Ascending aorta (tissue), 2 donors: ENCODE measurements at regions of chr19 and their contacts with region 1.

Region 1: DNA sequence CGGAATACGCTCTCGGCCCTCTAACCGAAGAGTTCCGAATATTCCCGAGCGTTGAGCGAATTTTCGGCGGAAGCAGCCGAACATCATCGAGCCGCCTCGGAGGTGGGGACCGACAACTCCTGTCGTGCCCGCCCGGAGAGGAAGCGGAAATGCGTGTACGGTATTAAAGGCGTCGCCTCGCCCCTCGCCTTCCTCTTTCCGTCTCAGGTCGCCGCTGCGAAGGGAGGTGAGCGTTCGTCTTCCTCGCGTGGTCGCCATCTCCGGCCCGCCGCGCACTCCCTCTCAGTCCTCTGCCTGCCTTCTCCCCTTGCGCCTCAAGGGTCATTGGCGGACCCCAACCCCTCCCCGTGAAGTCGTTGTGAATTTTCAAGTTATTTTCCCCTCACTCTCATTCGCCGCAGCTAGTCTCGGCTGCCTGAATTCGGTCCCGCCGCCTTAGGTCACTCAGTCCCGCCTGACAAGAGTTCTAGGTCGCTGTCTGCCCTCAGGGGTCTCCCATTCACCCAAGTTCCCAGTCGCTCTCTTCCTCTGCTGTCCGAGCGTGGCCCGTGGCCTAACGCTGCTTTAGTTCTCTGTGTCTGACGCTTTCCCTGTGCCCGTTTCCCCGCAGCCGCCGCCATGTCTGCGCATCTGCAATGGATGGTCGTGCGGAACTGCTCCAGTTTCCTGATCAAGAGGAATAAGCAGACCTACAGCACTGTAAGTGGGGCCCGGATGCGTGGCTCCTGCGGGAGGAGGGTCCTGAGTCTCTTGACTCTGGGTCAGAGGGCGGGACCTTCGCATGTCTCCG is at the start of gene RPL28:
- DNase-seq: peak; percentile 92 to 99
- H3K4me3 ChIP-seq: peak within 1 kb of the TSS; percentile 68 to 91
- H3K27ac ChIP-seq: peak within 1 kb of the TSS; percentile 92 to 93
- H3K4me1 ChIP-seq: peaks cover 11 to 39% of the 10 kb centered on the region in 2 donors
- H3K27me3 ChIP-seq: no peaks in the 10 kb centered on the region
- CTCF ChIP-seq: no peak
- total RNA-seq, gene RPL28: 542 TPM

Region 2: GRCh38 chr19:55279770-55280643 is 105.9 kb before region 1 on chr19 and contains the start of gene HSPBP1:
- intact Hi-C with region 1: loop called (anchors 1 kb)
- DNase-seq: peak; percentile 85 to 97
- H3K4me3 ChIP-seq: peak within 1 kb of the TSS; percentile 71 to 84
- H3K27ac ChIP-seq: peak within 1 kb of the TSS; percentile 66 to 68
- H3K4me1 ChIP-seq: peaks cover 11 to 16% of the 10 kb centered on the region in 2 donors
- H3K27me3 ChIP-seq: no peaks in the 10 kb centered on the region
- CTCF ChIP-seq: no peak
- total RNA-seq, gene HSPBP1: 72.7 TPM

Region 3: GRCh38 chr19:55339048-55339888 is 46.7 kb before region 1 on chr19 and contains the start of gene KMT5C:
- intact Hi-C with region 1: loop called (anchors 1 kb)
- DNase-seq: peak; percentile 100
- H3K4me3 ChIP-seq: peak within 1 kb of the TSS; percentile 82 to 84
- H3K27ac ChIP-seq: peak within 1 kb of the TSS; percentile 72 to 89
- H3K4me1 ChIP-seq: peaks cover 5 to 17% of the 10 kb centered on the region in 2 donors
- H3K27me3 ChIP-seq: no peaks in the 10 kb centered on the region
- CTCF ChIP-seq: peak; percentile 33 to 50 (median 47)
- total RNA-seq, gene KMT5C: 21.7 TPM

Region 4: GRCh38 chr19:55461259-55461973 is 75.5 kb after region 1 on chr19 and contains the start of gene ISOC2:
- intact Hi-C with region 1: loop called (anchors 2 kb)
- DNase-seq: peak; percentile 100
- H3K4me3 ChIP-seq: peak within 1 kb of the TSS; percentile 58 to 77
- H3K27ac ChIP-seq: peak within 1 kb of the TSS; percentile 67 to 79
- H3K4me1 ChIP-seq: peaks cover 0 to 5% of the 10 kb centered on the region in 2 donors
- H3K27me3 ChIP-seq: no peaks in the 10 kb centered on the region
- CTCF ChIP-seq: no peak
- total RNA-seq, gene ISOC2: 96.7 TPM

Region 5: GRCh38 chr19:55647732-55648589 is 262.0 kb after region 1 on chr19 and contains the start of gene CCDC106:
- intact Hi-C with region 1: loop called (anchors 5 kb)
- DNase-seq: peak in 1 of 2 donors; percentile 81
- H3K4me3 ChIP-seq: peak within 1 kb of the TSS; percentile 87 to 89
- H3K27ac ChIP-seq: peak within 1 kb of the TSS; percentile 74 to 80
- H3K4me1 ChIP-seq: peaks cover 5 to 16% of the 10 kb centered on the region in 2 donors
- H3K27me3 ChIP-seq: no peaks in the 10 kb centered on the region
- CTCF ChIP-seq: no peak
- total RNA-seq, gene CCDC106: 27.6 TPM